ENCODE measurements at regions of chr11 and their contacts with region 1.

Region 1: DNA sequence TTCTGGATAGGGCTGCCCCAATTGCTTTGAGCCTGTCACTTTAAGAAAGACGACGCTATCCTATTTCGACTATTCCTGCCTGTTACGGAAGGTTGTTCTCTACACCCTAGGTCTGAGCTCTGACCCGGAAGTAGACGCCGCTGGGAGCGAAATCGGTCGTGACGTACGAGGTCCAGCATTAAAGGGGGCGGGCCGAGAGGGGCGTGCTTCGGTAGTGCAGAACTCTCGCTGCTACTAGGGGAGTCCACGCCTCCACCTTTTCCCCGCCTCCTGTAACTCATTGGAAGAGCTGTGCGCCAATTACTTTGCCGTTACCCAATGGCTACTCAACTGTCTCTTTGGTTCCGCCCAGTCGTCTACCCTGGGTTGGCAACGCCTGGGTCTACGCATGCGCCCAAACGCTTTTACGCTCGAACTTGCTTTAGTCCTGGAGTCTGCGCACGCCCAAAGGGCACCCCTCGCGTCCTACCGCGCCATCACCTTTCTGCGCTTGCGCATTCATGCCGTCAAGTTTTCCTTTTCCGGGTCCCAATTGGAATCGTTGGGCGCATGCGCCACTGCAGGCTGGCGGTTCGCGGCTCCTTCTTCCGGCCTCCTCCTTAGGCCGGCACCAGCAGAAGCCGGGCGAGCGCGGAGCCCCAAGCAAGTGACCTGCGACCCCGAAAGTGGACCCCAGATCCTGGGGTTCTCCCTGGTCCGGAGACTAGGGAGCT is at the start of gene PCNX3:
- DNase-seq: peak; percentile 100
- H3K4me3 ChIP-seq: peak within 1 kb of the TSS; percentile 76 to 100 (median 98)
- H3K27ac ChIP-seq: peak within 1 kb of the TSS; percentile 71 to 100 (median 98)
- H3K27me3 ChIP-seq: no peaks in the 10 kb centered on the region
- CTCF ChIP-seq: peak in 21 of 56 donors; percentile 7 to 42 (median 21)
- total RNA-seq, gene PCNX3: 25.1 to 44.9 (median 31.2) TPM

Region 2: GRCh38 chr11:64334846-64335735 is 1280.3 kb before region 1 on chr11:
- intact Hi-C with region 1: no loop called
- DNase-seq: no peak
- H3K4me3 ChIP-seq: no peak overlapping the region
- H3K27ac ChIP-seq: no peak overlapping the region
- H3K27me3 ChIP-seq: no peaks in the 10 kb centered on the region
- CTCF ChIP-seq: no peak

Region 3: DNA sequence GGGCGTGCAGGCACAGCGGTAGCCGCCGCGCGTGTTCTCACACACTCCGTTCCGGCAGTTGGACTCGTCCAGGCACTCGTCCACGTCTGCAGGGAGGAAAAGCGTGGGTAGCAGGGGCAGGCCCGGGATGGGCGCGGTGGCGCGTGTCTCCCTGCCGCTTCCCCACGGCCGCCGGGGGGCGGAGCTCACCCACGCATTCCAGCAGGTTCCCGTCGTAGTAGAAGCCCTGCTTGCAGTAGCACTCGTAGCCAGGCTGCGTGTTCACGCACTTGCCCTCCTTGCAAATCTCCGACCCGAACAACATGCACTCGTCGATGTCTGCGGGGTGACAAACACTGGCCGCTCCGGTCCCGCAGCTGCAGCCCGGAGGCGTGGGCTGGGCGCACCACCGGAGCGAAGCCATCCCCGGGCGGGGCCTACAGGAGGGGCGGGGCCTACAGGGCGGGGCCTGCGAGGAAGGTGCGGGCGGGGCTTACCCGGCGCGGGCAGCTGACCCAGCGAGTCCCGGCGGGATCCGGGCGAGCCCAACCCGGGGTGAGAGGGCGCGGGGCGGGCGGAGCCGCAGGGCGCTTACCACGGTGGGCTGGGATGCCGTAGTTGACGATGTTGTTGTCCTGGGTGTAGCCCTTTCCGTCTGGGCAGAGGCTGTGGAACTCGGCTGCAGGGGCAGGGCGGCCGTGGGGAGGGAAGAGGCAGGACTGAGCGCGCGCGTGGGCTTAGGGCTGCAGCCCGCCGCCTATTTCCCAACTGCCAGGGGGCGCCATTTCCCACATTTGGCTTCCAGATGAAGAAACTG is 74.9 kb before region 1 on chr11:
- intact Hi-C with region 1: loop called (anchors 2 to 5 kb)
- DNase-seq: peak; percentile 81 to 94 (median 90)
- H3K4me3 ChIP-seq: peak overlapping the region; percentile 25 to 84 (median 59)
- H3K27ac ChIP-seq: peak overlapping the region; percentile 77 to 99 (median 94)
- H3K27me3 ChIP-seq: no peaks in the 10 kb centered on the region
- CTCF ChIP-seq: peak; percentile 63 to 95 (median 81)

Region 4: DNA sequence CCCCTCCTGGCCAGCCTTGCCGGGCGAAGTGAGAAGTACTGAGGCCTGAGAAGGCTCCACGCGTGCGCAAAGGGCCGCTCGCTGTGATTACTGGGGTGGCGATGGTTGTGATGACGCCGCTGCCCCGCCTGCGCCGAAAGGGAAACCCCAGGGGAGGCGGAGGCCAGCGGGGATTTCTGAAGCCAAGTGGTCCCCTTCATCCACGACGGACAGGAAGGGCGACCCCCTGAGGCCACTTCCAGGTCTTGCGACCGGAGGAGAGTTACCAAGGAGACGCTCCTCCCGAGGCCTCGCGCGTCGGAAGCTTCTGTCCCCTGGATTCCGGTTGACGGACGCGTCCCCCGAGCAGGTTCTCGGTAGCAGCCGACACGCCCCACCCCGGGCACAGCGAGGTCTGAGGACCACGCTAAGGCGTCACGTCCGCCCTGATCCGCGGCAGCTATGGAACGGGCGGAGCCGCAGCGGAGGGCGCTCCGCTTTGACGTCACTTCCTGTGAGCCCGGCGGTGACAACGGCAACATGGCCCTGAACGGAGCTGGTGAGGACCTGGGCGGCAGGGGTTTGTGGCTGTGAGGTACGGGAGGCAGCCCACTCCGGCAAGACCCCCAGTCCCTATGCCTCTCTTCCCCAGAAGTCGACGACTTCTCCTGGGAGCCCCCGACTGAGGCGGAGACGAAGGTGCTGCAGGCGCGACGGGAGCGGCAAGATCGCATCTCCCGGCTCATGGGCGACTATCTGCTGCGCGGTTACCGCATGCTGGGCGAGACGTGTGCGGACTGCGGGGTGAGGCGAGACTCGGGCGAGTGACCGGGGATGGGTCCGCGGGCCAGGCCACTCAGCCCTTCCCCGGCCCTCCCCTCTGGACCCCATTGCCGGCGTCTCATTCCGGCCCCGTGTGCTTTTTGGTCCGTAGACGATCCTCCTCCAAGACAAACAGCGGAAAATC is 45.1 kb before region 1 on chr11 and contains the start of gene ZNRD2:
- intact Hi-C with region 1: loop called (anchors 2 kb)
- DNase-seq: peak; percentile 97 to 99 (median 99)
- H3K4me3 ChIP-seq: peak within 1 kb of the TSS; percentile 68 to 99 (median 92)
- H3K27ac ChIP-seq: peak within 1 kb of the TSS; percentile 85 to 99 (median 96)
- H3K27me3 ChIP-seq: no peaks in the 10 kb centered on the region
- CTCF ChIP-seq: peak in 55 of 56 donors; percentile 44 to 84 (median 65)
- total RNA-seq, gene ZNRD2: 22.6 to 74.8 (median 38.1) TPM

Region 5: DNA sequence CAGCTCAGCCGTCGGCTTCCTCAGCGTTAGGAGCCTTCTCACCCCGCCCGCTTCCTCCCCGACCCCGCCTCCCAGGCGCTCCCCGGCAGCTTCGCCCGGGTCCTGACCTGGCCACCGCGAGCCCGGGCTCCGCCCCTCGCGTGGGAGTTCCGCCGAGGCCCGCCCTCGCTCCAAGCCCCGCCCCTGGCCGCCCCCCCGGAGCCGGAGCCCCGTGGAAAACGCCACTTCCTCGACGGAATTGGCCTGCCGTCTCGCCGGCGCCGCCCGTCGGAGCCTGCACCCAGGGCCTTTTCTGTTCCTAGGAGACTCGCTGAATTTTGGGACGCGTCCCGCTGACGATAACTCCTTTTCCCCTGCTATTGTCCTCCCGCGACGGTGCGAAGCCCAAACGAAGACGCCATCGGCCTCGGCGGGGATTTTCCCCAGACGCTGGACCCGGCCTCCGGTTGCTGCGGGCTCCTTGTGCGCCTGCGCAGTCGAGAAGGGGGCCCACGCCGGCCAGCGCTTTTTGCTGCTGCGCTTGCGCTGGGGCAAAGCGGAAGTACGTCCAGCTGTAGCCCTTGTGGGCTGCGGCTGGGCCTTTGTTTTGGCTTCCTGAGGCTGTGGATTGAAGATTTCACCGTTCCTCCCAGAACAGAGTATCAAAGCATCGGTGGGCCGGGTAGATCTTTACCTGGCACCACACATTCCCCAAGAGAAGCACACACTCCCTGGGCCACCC is 37.3 kb after region 1 on chr11:
- intact Hi-C with region 1: loop called (anchors 5 kb)
- DNase-seq: peak; percentile 75 to 94 (median 84)
- H3K4me3 ChIP-seq: peak overlapping the region; percentile 34 to 79 (median 65)
- H3K27ac ChIP-seq: peak overlapping the region; percentile 85 to 99 (median 96)
- H3K27me3 ChIP-seq: peaks cover 0 to under 1% (median 0%) of the 10 kb centered on the region in 45 donors
- CTCF ChIP-seq: peak in 30 of 56 donors; percentile 5 to 61 (median 28)

Region 6: GRCh38 chr11:65662799-65663638 is 47.6 kb after region 1 on chr11 and contains the start of gene RELA:
- intact Hi-C with region 1: loop called (anchors 2 kb)
- DNase-seq: peak; percentile 90 to 97 (median 94)
- H3K4me3 ChIP-seq: peak within 1 kb of the TSS; percentile 62 to 100 (median 92)
- H3K27ac ChIP-seq: peak within 1 kb of the TSS; percentile 91 to 100 (median 99)
- H3K27me3 ChIP-seq: no peaks in the 10 kb centered on the region
- CTCF ChIP-seq: peak in 30 of 56 donors; percentile 6 to 51 (median 24)
- total RNA-seq, gene RELA: 28.1 to 93.7 (median 48.2) TPM

Region 7: GRCh38 chr11:66268283-66268951 is 653.0 kb after region 1 on chr11 and contains the start of gene RAB1B:
- intact Hi-C with region 1: loop called in 1 of 2 experiments (anchors 5 kb)
- DNase-seq: peak; percentile 99 to 100 (median 99)
- H3K4me3 ChIP-seq: peak within 1 kb of the TSS; percentile 65 to 100 (median 91)
- H3K27ac ChIP-seq: peak within 1 kb of the TSS; percentile 89 to 100 (median 98)
- H3K27me3 ChIP-seq: no peaks in the 10 kb centered on the region
- CTCF ChIP-seq: peak in 8 of 56 donors; percentile 3 to 42 (median 12)
- total RNA-seq, gene RAB1B: 94.3 to 135 (median 115) TPM

Measured in dorsolateral prefrontal cortex (tissue), 120 donors.